Common myeloid progenitor, CD34-positive (primary cell): ENCODE measurements at regions of chr6 and their contacts with region 1.

Region 1: DNA sequence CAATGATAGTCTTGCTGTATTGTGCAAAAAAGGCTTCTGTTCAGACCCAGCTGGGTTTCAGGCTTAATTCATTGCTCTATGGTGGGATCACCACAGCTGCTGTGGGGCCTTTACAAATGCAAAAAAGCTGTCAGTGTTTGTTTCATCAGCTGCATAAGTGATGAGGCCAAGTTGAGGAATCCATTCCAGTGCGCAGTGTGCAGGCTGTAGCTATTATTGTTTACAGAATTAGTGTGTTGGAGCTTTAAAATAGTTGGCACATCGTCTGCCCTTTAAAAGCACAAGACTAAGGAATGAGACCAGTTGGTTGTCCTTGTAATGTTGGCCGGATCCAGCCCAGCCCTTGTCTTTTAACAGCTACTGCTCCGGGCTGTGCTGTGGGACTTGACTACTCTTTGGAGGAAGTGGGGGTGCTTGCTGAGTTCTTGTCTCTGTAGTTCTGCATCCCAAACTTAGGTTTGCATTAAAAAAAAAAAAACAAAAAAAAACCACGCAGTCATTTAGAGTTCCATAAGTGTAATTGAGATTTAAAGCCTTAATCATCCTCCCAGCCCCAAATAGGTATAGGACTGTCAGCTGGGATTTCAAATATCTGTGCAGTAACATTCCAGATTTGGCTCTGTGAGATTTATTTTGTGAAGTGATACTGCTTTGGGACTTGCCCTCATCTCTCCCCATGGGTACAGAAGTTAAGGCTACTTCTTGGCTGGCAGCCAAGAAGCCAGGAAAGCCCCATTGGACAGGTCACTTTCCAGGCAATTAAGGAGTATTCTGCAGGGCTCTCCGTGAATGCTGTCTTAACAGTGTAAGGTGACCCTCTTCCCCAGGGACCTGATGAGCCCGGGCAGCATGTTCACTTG is 19.3 kb downstream of the JARID2 start:
- DNase-seq: peak in 1 of 3 donors; percentile 57
- H3K4me3 ChIP-seq: peak overlapping the region in 5 of 7 experiments; percentile 38 to 67 (median 56)
- H3K27ac ChIP-seq: peak overlapping the region; percentile 75 to 93
- H3K4me1 ChIP-seq: peaks cover 53 to 93% (median 87%) of the 10 kb centered on the region in 4 experiments
- H3K27me3 ChIP-seq: no peaks in the 10 kb centered on the region

Region 2: DNA sequence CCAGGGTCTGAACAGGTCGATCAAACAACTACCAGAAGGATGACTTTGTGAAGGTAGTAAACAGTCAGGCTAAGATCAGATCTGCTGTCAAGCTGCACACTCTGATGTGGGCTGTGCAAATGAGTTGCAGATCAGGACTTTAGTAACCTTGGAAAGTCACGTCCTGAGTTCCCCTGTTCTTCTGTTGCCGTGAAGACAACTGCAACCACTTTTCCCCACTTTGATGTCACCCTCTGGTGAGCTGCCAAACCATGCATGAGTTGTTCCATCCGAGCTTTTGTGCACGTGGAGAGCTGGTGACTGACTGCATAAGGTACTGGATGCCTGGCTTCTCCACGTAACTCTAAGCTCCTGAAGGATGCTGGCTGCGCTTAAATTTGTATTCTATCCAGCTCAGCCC is 1036.6 kb before region 1 on chr6:
- CTCF ChIA-PET with region 1: no interaction called
- POLR2A ChIA-PET with region 1: no interaction called
- DNase-seq: peak in 2 of 3 donors; percentile 34 to 41
- H3K4me3 ChIP-seq: no peak overlapping the region
- H3K27ac ChIP-seq: no peak overlapping the region
- H3K4me1 ChIP-seq: peaks cover 3 to 15% (median 7%) of the 10 kb centered on the region in 4 experiments
- H3K27me3 ChIP-seq: peaks cover 0 to 1% (median 0%) of the 10 kb centered on the region in 5 experiments

Region 3: DNA sequence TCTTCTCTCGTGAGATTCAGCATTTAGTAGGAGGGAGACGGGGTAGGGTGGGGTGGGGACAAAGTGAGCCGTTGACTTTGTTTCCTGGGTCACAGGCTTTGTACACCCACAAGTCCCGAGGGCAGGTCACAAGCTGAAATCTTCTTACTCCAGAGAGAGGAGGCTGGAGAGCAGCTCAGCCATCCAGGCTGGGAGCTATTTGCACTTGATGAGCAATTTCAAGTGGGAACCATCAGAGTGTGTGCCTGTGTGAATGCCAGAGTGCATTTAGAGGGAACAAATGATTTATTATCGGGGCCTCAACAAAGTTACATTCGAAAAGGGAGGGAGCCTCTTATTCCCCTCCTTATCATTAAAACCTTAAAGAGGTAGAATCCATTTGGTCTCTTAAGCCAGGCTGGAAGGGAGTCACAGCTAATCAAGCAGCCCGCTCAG is 175.0 kb before region 1 on chr6:
- CTCF ChIA-PET with region 1: no interaction called
- POLR2A ChIA-PET with region 1: no interaction called
- DNase-seq: no peak
- H3K4me3 ChIP-seq: no peak overlapping the region
- H3K27ac ChIP-seq: peak overlapping the region in 1 of 2 experiments; percentile 83
- H3K4me1 ChIP-seq: peaks cover 5 to 24% (median 9%) of the 10 kb centered on the region in 4 experiments
- H3K27me3 ChIP-seq: no peaks in the 10 kb centered on the region

Region 4: GRCh38 chr6:15179302-15179701 is 85.8 kb before region 1 on chr6:
- CTCF ChIA-PET with region 1: no interaction called
- POLR2A ChIA-PET with region 1: no interaction called
- DNase-seq: no peak
- H3K4me3 ChIP-seq: no peak overlapping the region
- H3K27ac ChIP-seq: no peak overlapping the region
- H3K4me1 ChIP-seq: no peaks in the 10 kb centered on the region
- H3K27me3 ChIP-seq: no peaks in the 10 kb centered on the region

Region 5: GRCh38 chr6:15218401-15218800 is 46.7 kb before region 1 on chr6:
- CTCF ChIA-PET with region 1: no interaction called
- POLR2A ChIA-PET with region 1: no interaction called
- DNase-seq: no peak
- H3K4me3 ChIP-seq: no peak overlapping the region
- H3K27ac ChIP-seq: no peak overlapping the region
- H3K4me1 ChIP-seq: peaks cover 0 to 2% (median 0%) of the 10 kb centered on the region in 4 experiments
- H3K27me3 ChIP-seq: no peaks in the 10 kb centered on the region

Region 6: DNA sequence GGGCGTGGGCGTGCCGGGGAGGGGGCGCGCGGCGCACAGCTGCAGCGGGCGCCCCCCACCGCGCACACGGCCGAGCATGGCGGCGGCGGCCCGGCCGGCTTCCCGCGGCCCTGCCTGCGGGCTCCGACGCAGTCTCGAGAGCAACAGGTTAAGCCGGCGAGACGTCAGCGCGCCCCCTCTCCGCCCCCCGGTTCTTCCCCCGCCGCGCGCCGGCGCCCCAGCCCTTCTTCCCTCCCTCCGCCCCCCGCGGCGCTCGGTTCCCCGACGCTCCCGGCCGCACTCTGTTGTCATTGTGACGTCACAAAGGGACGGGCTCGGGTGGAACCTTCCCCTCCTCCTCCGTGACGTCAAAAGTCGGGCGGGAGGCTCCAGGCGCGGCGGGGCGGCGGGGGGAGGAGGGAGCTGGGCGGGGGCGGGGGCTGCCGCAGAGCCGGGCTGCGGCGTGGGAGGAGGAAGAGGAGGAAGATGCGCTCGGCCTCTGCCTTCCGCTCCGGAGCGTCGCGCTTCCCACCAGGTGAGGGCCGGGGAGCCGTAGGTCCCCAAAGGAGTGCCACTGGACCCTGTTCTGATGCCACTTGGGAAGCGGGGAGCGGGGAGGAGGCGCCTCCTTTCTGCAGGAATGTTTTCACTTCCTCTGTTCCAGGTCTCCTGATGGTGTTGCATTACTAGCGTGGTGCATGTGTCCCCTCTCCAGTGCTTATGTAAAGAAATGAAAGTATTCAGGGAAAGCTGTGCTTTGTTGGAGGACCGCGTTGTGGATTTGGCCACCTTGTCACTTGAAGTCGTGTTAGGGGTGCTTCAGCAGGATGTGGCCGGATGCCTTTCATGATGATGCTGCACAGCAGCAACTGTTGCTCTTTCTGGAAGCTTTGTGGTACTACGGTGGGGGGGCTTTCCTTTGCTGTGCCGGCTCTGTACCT is 16.4 kb before region 1 on chr6:
- CTCF ChIA-PET with region 1: interaction called, 32 read pairs
- POLR2A ChIA-PET with region 1: interaction called, 6 read pairs
- DNase-seq: peak; percentile 98 to 99 (median 99)
- H3K4me3 ChIP-seq: peak overlapping the region; percentile 54 to 91 (median 72)
- H3K27ac ChIP-seq: peak overlapping the region; percentile 69 to 90
- H3K4me1 ChIP-seq: peaks cover 10 to 62% (median 56%) of the 10 kb centered on the region in 4 experiments
- H3K27me3 ChIP-seq: no peaks in the 10 kb centered on the region

Region 7: DNA sequence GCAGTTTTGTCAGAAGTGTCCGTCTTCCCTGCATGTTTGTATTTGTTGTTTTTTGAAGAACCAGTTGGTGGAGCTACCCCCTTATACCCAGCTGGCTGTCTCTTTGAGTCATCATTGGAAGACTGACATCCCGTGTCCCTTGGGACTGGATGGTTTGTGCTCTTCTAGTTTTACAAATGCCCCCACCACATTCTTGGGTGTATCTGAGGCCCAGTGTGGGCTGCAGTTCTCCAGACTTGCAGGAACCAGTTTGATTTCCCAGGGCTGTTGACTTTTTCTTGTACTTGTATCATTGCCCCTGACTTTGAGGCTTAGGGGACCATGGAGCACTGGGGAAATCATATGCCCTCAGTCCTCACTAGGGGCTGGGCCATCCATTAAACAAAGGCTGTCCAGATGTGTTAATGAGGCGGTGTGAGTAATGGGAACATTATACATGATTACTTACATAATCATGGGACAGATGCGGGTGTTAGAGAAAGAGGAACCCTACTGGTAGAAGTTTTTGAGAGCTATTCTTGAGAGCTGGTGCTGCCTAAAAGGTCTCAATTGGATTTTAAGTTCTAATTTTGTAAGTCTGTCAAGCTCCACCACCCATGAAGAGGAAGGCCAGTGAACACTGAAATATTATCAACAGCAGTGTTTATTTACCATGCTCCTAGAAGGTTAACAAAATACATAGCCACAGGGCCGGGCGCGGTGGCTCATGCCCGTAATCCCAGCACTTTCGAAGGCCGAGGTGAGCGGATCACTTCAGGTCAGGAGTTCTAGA is 10.9 kb before region 1 on chr6:
- CTCF ChIA-PET with region 1: interaction called, 32 read pairs
- POLR2A ChIA-PET with region 1: interaction called, 6 read pairs
- DNase-seq: peak; percentile 47 to 81 (median 72)
- H3K4me3 ChIP-seq: peak overlapping the region in 2 of 7 experiments; percentile 11 to 14
- H3K27ac ChIP-seq: peak overlapping the region in 1 of 2 experiments; percentile 50
- H3K4me1 ChIP-seq: peaks cover 22 to 97% (median 79%) of the 10 kb centered on the region in 4 experiments
- H3K27me3 ChIP-seq: no peaks in the 10 kb centered on the region

Region 8: GRCh38 chr6:15287670-15288375 is 22.7 kb after region 1 on chr6:
- CTCF ChIA-PET with region 1: interaction called, 15 read pairs
- POLR2A ChIA-PET with region 1: no interaction called
- DNase-seq: peak in 2 of 3 donors; percentile 76 to 88
- H3K4me3 ChIP-seq: peak overlapping the region in 3 of 7 experiments; percentile 21 to 47 (median 32)
- H3K27ac ChIP-seq: peak overlapping the region; percentile 4 to 67
- H3K4me1 ChIP-seq: peaks cover 20 to 71% (median 46%) of the 10 kb centered on the region in 4 experiments
- H3K27me3 ChIP-seq: no peaks in the 10 kb centered on the region

Region 9: DNA sequence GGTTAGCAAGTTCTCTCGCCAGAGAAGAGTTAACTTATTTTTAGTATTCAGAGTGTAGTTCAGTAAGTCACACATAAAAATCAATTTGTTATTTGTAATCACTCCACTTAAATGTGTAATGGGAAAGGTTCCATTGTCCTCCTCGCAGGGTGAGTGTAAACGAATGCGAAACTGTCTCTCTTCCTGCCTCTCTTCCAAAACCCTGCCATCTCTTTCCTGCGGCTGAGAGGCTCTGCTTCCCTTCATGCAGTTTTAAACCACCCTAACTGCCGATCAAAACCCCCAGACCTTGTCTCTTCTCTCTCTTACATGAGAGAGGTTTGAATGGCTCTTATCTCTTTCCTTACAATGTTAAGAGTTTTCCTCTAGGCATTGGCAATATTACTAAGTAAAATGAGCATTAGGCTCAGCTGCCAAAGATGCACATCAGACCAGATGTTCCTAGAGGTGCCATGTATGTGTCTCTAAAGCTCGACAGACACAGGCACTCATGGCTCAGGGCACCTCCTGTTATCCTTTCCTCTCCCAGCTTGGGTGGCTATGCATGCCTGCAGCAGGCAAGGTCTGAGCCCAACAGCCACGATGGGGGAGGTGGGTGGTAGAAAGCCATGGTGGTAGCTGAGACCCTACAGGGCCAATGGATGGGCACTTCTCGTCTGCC is 71.9 kb after region 1 on chr6:
- CTCF ChIA-PET with region 1: interaction called, 11 read pairs
- POLR2A ChIA-PET with region 1: no interaction called
- DNase-seq: peak in 2 of 3 donors; percentile 77 to 81
- H3K4me3 ChIP-seq: peak overlapping the region in 6 of 7 experiments; percentile 29 to 52 (median 41)
- H3K27ac ChIP-seq: peak overlapping the region; percentile 3 to 64
- H3K4me1 ChIP-seq: peaks cover 43 to 95% (median 77%) of the 10 kb centered on the region in 4 experiments
- H3K27me3 ChIP-seq: no peaks in the 10 kb centered on the region